H1 (cell line): ENCODE measurements at regions of chr1 and their contacts with region 1.

Region 1: GRCh38 chr1:3453203-3453761 is 1.2 kb upstream of the ARHGEF16 start:
- DNase-seq: peak; percentile 49 to 99
- H3K4me3 ChIP-seq: peak overlapping the region in 1 of 4 experiments; percentile 53; a peak in 1 of 8 replicates
- H3K27ac ChIP-seq: no peak overlapping the region
- H3K4me1 ChIP-seq: peaks cover 0 to 20% (median 16%) of the 10 kb centered on the region in 4 experiments; a peak in 6 of 7 replicates
- H3K27me3 ChIP-seq: peaks cover 0 to 3% (median 0%) of the 10 kb centered on the region in 4 experiments; a peak in 2 of 7 replicates
- CTCF ChIP-seq: peak in 2 of 3 experiments; percentile 94 to 98; a peak in 3 of 4 replicates
- EP300 ChIP-seq: no peak
- POLR2A ChIP-seq: no peak
- RAD21 ChIP-seq: peak; percentile 97 to 98

Region 2: DNA sequence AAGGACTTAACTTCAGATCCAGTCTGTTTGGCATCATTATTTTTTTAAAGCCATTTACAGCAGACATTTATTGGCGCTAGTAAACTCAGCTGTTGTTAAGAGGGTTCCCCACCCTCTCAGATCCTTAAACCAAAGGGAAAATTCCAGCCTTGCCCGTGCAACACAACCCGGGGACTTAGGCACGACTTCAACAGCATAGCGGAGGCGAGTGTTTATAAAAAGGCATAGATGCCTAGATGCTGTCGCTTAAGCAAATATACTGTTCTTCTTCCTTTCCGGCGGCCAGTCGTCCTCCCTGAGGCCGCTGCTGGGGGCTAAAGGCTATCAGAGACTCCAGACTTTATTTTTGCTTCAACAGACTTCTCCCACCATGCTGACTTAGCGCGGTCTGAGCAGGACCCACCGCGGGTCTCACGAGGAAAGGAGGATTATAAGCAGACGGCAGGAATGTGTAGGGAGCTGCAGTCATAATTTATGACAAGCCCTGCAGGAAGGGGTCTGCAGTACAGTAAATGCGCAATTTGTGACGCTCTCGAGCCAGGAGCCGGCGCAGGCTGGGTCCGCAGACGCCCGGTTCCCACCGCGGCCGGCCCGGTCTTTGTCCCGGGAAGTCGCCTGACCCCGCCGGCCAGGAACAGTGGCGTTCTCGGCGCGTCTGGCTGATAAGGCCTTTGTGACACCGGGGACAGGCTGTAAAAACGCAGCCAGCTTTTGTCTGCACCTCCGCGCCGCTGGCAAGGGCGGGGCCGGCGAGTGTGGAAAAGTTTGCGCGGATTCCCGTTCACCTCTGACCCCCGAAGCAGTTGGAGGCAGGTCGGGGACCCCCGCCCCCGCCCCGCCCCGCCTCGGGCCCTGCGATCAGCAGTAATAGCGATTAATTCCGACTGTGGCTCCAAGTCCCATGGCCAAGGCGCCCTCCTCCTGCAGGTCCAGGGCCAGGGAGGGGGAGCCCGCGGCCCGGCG is 60.0 kb before region 1 on chr1:
- CTCF ChIA-PET with region 1: no interaction called
- POLR2A ChIA-PET with region 1: no interaction called
- DNase-seq: peak in 1 of 2 experiments; percentile 68
- H3K4me3 ChIP-seq: peak overlapping the region; percentile 36 to 75 (median 42)
- H3K27ac ChIP-seq: no peak overlapping the region
- H3K4me1 ChIP-seq: peaks cover 3 to 22% (median 3%) of the 10 kb centered on the region in 4 experiments
- H3K27me3 ChIP-seq: peaks cover 18 to 59% (median 53%) of the 10 kb centered on the region in 4 experiments
- CTCF ChIP-seq: no peak
- EP300 ChIP-seq: no peak
- POLR2A ChIP-seq: no peak
- RAD21 ChIP-seq: no peak

Region 3: GRCh38 chr1:3441410-3441847 is 11.9 kb before region 1 on chr1:
- CTCF ChIA-PET with region 1: interaction called, 35 read pairs
- POLR2A ChIA-PET with region 1: no interaction called
- DNase-seq: no peak
- H3K4me3 ChIP-seq: no peak overlapping the region
- H3K27ac ChIP-seq: no peak overlapping the region
- H3K4me1 ChIP-seq: peaks cover 0 to 3% (median 1%) of the 10 kb centered on the region in 4 experiments; a peak in 3 of 7 replicates
- H3K27me3 ChIP-seq: peaks cover 0 to 2% (median under 1%) of the 10 kb centered on the region in 4 experiments; a peak in 1 of 7 replicates
- CTCF ChIP-seq: no peak
- EP300 ChIP-seq: no peak
- POLR2A ChIP-seq: no peak
- RAD21 ChIP-seq: no peak

Region 4: GRCh38 chr1:3471302-3472087 is 18.2 kb after region 1 on chr1:
- CTCF ChIA-PET with region 1: interaction called, 39 read pairs
- POLR2A ChIA-PET with region 1: interaction called, 26 read pairs
- DNase-seq: peak; percentile 73 to 74
- H3K4me3 ChIP-seq: 0 out of 8 replicates have a peak overlapping the region, but pooled peaks of 1 of the 4 experiments have one; percentile 11
- H3K27ac ChIP-seq: peak overlapping the region; percentile 75
- H3K4me1 ChIP-seq: peaks cover 0 to 22% (median 16%) of the 10 kb centered on the region in 4 experiments; a peak in 6 of 7 replicates
- H3K27me3 ChIP-seq: no peaks in the 10 kb centered on the region
- CTCF ChIP-seq: peak in 2 of 3 experiments; percentile 47 to 61; a peak in 3 of 4 replicates
- EP300 ChIP-seq: peak in 1 of 2 experiments; percentile 52; a peak in 1 of 3 replicates
- POLR2A ChIP-seq: no peak
- RAD21 ChIP-seq: peak; percentile 44 to 59

Region 5: DNA sequence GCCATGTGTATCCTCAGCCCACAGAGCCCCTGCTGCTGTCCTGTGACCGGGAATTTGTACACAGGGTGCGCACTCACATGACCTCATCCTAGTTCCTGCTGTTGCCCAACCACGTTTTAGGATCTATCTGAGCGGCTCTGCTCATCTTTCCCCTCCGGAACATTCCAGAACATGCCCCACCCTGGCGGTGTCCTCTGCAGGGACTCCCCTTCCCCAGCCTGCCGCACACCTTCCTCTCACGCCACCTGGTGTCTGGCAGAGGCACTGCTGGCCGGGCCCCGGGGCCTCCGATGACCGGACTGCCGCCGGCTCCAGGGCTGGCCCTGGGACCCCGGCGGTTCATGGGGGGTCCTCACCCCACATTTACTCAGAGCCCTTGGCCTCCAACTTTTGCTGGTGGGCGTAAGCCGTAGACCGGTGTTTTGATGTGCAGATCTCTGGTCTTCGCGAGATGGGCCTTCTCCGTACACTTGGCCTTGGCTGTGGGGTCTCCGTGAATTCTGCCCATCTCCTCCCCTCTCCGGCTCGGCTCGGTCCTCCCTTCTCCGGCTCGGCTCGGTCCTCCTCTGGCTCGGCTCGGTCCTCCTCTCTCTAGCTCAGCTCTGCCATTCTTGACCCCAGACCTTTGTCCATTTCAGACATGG is 30.6 kb after region 1 on chr1:
- CTCF ChIA-PET with region 1: interaction called, 59 read pairs
- POLR2A ChIA-PET with region 1: interaction called, 18 read pairs
- DNase-seq: peak; percentile 44 to 97
- H3K4me3 ChIP-seq: no peak overlapping the region
- H3K27ac ChIP-seq: no peak overlapping the region
- H3K4me1 ChIP-seq: no peaks in the 10 kb centered on the region
- H3K27me3 ChIP-seq: no peaks in the 10 kb centered on the region
- CTCF ChIP-seq: peak in 2 of 3 experiments; percentile 81 to 95; a peak in 3 of 4 replicates
- EP300 ChIP-seq: no peak
- POLR2A ChIP-seq: no peak; a peak in 1 of 3 replicates
- RAD21 ChIP-seq: peak; percentile 70 to 81

Region 6: GRCh38 chr1:3507636-3508275 is 54.5 kb after region 1 on chr1:
- CTCF ChIA-PET with region 1: interaction called, 15 read pairs
- POLR2A ChIA-PET with region 1: no interaction called
- DNase-seq: no peak
- H3K4me3 ChIP-seq: no peak overlapping the region
- H3K27ac ChIP-seq: no peak overlapping the region
- H3K4me1 ChIP-seq: no peaks in the 10 kb centered on the region
- H3K27me3 ChIP-seq: no peaks in the 10 kb centered on the region
- CTCF ChIP-seq: no peak
- EP300 ChIP-seq: no peak
- POLR2A ChIP-seq: no peak
- RAD21 ChIP-seq: no peak

Region 7: DNA sequence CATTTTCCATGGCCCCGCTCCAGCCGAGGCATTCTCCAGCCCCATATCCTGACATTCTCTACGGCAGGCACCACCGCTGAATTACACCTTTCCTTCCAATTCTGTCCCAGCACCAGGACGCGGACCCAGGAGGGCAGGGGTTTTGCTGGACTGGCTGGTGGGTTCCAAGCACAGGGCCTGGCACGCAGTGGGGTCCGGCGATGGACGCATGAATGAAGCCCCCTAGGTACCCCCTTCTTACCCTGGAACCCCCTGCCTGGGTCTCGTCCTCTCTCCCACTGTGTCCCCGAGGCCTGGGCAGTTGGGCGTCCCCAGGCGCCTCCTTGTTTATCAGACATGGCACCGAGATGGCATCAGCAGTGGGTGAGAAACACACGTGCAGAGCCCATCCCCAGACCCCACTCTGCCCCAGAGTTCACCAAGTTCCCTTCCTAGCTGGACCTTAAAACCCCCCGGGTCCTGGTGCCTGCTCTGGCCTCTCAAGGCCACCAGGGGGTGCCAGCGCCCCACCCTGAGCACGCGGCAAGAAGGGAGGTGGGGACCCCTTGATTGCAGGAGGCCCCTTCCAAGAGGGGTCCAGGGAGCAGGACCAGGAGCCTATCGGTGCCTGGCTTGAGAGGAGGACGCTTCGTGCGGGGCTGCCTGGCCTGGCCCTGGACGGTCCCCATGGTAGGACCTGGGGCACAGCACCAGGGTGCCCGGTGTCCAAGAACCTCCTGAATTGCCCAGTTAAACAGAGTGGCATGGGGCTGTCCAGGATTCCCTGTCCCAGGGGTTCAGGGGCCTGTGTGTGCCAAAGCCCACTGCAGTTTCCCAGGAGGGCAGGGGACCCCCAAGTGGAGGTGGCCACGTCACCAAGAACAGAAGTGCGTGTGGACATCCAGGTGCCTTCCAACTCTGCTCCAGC is 111.9 kb after region 1 on chr1:
- CTCF ChIA-PET with region 1: interaction called, 18 read pairs
- POLR2A ChIA-PET with region 1: no interaction called
- DNase-seq: peak; percentile 31 to 87
- H3K4me3 ChIP-seq: no peak overlapping the region
- H3K27ac ChIP-seq: no peak overlapping the region
- H3K4me1 ChIP-seq: no peaks in the 10 kb centered on the region
- H3K27me3 ChIP-seq: no peaks in the 10 kb centered on the region
- CTCF ChIP-seq: peak in 2 of 3 experiments; percentile 95 to 97; a peak in 3 of 4 replicates
- EP300 ChIP-seq: no peak
- POLR2A ChIP-seq: no peak
- RAD21 ChIP-seq: peak; percentile 97 to 98